Panc1 (cell line): ENCODE measurements at regions of chr1 and their contacts with region 1.

Region 1: DNA sequence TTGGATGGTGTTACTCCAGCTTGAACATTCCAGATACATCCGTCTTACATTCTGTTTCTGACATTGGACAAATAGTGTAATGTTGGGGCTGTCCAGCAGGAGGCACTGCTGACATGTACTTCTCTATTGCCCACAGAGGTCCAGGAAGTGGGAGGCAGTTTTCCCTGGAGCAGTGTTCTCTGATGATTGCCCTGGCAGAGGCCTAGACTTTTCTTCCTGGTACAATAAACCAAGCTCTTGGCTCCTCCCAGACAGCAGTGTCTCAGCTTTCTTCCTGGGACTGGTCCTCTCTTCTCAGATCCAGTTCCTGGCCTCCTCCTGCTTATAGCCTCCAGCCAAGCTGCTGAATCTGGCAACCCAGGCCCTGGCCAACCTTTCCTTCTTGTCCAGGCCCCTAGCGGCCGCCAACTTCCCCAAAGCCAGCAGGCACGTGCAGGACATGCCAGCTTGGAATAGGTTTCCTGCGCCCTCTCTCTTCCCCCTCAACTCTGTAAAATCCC is 14.9 kb upstream of the IFNLR1 start:
- DNase-seq: peak; percentile 86
- ATAC-seq: peak; percentile 87
- H3K4me3 ChIP-seq: no peak overlapping the region
- H3K27ac ChIP-seq: peak overlapping the region; percentile 75
- H3K4me1 ChIP-seq: peaks cover 9% of the 10 kb centered on the region
- H3K27me3 ChIP-seq: no peaks in the 10 kb centered on the region
- CTCF ChIP-seq: peak; percentile 88

Region 2: DNA sequence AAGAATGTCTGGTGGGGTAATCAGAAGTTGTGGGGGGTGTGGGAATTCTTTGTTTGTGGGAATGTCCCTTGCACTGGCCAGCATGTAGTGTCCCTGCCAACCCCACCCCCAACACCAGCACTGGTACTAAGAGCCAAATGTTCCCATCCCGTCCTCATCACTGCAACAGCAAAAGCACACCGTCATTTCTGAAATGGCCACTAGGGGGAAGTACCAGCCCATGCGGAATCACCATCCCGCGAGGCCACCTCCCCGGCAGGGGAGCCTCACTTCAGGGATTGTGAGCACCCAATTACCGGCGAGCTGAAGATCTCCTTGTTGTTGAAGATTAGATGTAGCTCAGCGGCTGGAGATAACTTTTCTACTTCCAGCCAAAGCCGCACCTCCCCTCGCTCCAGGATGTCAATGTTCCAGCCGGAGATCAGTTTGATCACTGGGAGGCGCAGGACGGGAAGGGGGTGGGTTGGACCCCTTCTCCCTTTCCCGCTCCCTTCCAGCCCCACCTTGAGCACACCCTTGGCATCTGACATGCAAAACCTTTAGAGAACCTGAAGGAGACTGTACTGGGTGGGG is 131.1 kb before region 1 on chr1:
- CTCF ChIA-PET with region 1: interaction called, 7 read pairs
- POLR2A ChIA-PET with region 1: interaction called, 3 read pairs
- in situ Hi-C with region 1: no loop called
- intact Hi-C with region 1: loop called (anchors 5 kb)
- DNase-seq: peak; percentile 67
- ATAC-seq: peak; percentile 95
- H3K4me3 ChIP-seq: no peak overlapping the region
- H3K27ac ChIP-seq: no peak overlapping the region
- H3K4me1 ChIP-seq: peaks cover 8% of the 10 kb centered on the region; the same call in 1 of the 2 replicates
- H3K27me3 ChIP-seq: no peaks in the 10 kb centered on the region
- CTCF ChIP-seq: peak; percentile 95

Region 3: GRCh38 chr1:24150234-24151174 is 51.5 kb before region 1 on chr1:
- CTCF ChIA-PET with region 1: interaction called, 32 read pairs
- POLR2A ChIA-PET with region 1: no interaction called
- in situ Hi-C with region 1: no loop called
- intact Hi-C with region 1: no loop called
- DNase-seq: peak; percentile 84
- ATAC-seq: peak; percentile 98
- H3K4me3 ChIP-seq: peak overlapping the region; percentile 20 to 51
- H3K27ac ChIP-seq: peak overlapping the region; percentile 37
- H3K4me1 ChIP-seq: peaks cover 5% of the 10 kb centered on the region; the same call in 1 of the 2 replicates
- H3K27me3 ChIP-seq: no peaks in the 10 kb centered on the region
- CTCF ChIP-seq: peak; percentile 95

Region 4: GRCh38 chr1:24228311-24228710 is 26.3 kb after region 1 on chr1:
- CTCF ChIA-PET with region 1: no interaction called
- POLR2A ChIA-PET with region 1: no interaction called
- in situ Hi-C with region 1: no loop called
- intact Hi-C with region 1: no loop called
- DNase-seq: no peak
- ATAC-seq: no peak
- H3K4me3 ChIP-seq: no peak overlapping the region
- H3K27ac ChIP-seq: no peak overlapping the region
- H3K4me1 ChIP-seq: no peaks in the 10 kb centered on the region
- H3K27me3 ChIP-seq: no peaks in the 10 kb centered on the region
- CTCF ChIP-seq: no peak

Region 5: DNA sequence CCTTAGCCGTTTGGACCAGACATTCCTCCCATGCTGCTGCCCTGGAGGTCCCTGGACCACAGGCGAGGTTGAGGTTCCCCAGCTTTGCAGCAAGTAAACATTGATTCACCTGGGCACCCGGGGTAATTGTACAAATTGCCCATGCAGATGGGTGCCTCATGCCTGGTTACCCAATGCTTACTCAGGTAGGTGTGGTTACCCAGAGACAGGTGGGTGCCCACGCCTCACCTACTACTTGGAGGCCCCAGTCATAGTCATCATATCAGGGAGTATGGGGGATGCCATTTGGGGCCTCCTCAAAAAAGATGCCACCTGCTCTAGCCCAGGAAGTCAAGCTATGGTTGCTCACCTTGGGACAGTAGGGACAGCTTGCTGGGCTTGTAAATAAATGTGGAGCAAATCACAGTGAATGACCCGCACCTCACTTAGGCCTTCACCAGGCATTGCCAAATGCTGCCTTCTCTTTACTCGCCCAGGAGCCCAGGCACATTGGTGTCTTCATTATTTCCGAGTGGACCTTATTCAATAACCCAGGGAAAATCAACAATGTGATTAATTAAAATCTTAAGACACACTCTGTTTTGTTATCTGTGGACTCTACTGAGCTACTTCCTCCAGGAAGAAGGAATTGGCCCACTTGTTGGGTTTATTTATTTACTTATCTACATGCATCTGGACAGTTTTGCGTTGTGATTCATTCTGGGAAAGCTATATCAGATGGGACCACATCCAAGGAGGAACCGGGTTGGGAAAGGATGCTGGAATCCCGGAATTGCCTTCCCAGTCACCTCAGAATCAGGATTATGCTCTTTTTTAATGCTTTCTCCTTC is 81.5 kb after region 1 on chr1:
- CTCF ChIA-PET with region 1: no interaction called
- POLR2A ChIA-PET with region 1: no interaction called
- in situ Hi-C with region 1: no loop called
- intact Hi-C with region 1: no loop called
- DNase-seq: peak; percentile 89
- ATAC-seq: peak; percentile 85
- H3K4me3 ChIP-seq: peak overlapping the region in 1 of 2 experiments; percentile 15; a peak in 1 of 4 replicates
- H3K27ac ChIP-seq: peak overlapping the region; percentile 68
- H3K4me1 ChIP-seq: peaks cover 34% of the 10 kb centered on the region
- H3K27me3 ChIP-seq: no peaks in the 10 kb centered on the region
- CTCF ChIP-seq: no peak

Region 6: DNA sequence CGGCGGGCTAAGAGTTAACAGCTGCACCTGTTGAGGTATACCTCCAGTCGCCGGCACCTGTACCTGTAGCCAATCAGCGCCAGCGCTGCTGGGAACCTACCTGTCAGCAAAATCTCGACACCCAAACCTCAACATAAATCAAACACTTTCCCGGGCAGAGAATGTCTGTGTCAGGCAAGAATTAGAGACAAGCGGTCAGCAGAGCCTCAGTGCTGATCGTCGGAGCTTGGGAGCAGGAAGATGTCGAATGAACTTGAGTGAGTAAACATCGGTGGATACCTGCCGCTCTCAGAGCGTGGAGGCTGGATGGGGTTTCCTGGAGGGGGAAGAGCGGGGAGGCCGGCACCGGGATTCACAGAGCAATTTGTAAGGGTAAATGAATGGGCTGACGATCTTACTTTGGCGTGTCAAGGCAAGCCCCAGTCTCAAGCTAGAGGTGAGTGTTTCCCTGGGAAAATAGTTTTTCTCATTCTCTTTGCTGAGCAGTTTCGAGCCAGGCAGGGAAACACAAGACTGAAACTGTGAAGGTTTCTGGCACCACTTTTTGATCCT is 117.4 kb after region 1 on chr1 and contains the start of gene GRHL3:
- CTCF ChIA-PET with region 1: interaction called, 4 read pairs
- POLR2A ChIA-PET with region 1: no interaction called
- in situ Hi-C with region 1: no loop called
- intact Hi-C with region 1: loop called (anchors 5 kb)
- DNase-seq: no peak
- ATAC-seq: peak; percentile 16; the same call in 1 of the 2 replicates
- H3K4me3 ChIP-seq: peak within 1 kb of the TSS; percentile 46 to 71
- H3K27ac ChIP-seq: peak within 1 kb of the TSS; percentile 88
- H3K4me1 ChIP-seq: peaks cover 64% of the 10 kb centered on the region
- H3K27me3 ChIP-seq: no peaks in the 10 kb centered on the region
- CTCF ChIP-seq: no peak
- total RNA-seq, gene GRHL3: 16.7 TPM